Dorsolateral prefrontal cortex (tissue), 120 donors: ENCODE measurements at regions of chr20 and their contacts with region 1.

Region 1: GRCh38 chr20:3162080-3162611 is 2.5 kb upstream of the FASTKD5 start:
- DNase-seq: peak in 1 of 10 donors; percentile 73
- H3K4me3 ChIP-seq: peak overlapping the region in 1 of 59 donors; percentile 3
- H3K27ac ChIP-seq: peak overlapping the region in 20 of 59 donors; percentile 0 to 95 (median 30)
- H3K27me3 ChIP-seq: no peaks in the 10 kb centered on the region
- CTCF ChIP-seq: no peak

Region 2: GRCh38 chr20:3172743-3173609 is 10.8 kb after region 1 on chr20 and contains the start of gene LZTS3:
- intact Hi-C with region 1: loop called in 1 of 2 experiments (anchors 1 kb)
- DNase-seq: peak in 9 of 10 donors; percentile 53 to 84 (median 69)
- H3K4me3 ChIP-seq: peak within 1 kb of the TSS; percentile 68 to 100 (median 93)
- H3K27ac ChIP-seq: peak within 1 kb of the TSS; percentile 27 to 96 (median 86)
- H3K27me3 ChIP-seq: no peaks in the 10 kb centered on the region
- CTCF ChIP-seq: peak in 11 of 56 donors; percentile 8 to 36 (median 15)
- total RNA-seq, gene LZTS3: 55.7 to 232 (median 165) TPM

Region 3: DNA sequence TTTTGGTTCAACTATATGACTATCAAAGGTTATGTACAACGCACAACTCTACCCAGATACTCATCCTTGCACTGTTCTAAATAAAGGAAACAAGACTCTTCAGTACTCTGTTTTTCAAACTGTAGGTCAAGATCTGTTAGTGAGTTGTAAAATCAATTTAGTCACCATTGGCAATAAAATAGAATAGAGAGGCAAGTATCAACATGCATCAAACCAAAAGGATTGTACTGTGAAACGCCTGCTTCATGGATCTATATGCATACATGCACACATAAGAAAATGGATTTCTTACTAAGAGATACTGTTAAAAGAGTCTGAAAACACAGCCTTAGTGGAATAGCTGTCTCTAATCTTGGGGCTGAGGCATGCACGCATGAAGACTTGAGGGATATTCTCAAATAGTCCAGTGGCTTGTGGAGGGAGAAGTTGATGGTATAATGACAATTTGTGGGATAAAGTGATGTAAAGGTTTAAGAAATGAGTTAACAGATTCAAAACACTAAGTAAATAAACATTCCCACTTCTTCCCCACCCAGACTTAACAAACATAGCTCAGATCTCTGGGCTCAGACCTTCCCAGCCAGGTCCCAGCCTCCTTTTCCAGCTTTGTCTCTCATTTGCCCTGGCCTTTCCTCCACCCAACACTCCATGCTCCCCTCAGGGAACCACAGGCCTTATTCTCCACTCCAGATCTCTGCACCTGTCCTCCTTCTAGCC is 21.9 kb after region 1 on chr20:
- intact Hi-C with region 1: no loop called
- DNase-seq: no peak
- H3K4me3 ChIP-seq: no peak overlapping the region
- H3K27ac ChIP-seq: peak overlapping the region in 15 of 59 donors; percentile 1 to 64 (median 24)
- H3K27me3 ChIP-seq: no peaks in the 10 kb centered on the region
- CTCF ChIP-seq: no peak

Region 4: GRCh38 chr20:3209257-3209945 is 47.3 kb after region 1 on chr20 and contains the start of gene ITPA:
- intact Hi-C with region 1: loop called in 1 of 2 experiments (anchors 5 kb)
- DNase-seq: peak in 9 of 10 donors; percentile 35 to 76 (median 56)
- H3K4me3 ChIP-seq: peak within 1 kb of the TSS; percentile 57 to 97 (median 89)
- H3K27ac ChIP-seq: peak within 1 kb of the TSS in 56 of 59 donors; percentile 4 to 92 (median 82)
- H3K27me3 ChIP-seq: no peaks in the 10 kb centered on the region
- CTCF ChIP-seq: peak in 4 of 56 donors; percentile 8 to 17 (median 10)
- total RNA-seq, gene ITPA: 18.3 to 51.4 (median 33.9) TPM